H1 (cell line): ENCODE measurements at regions of chr15 and their contacts with region 1.

Region 1: GRCh38 chr15:41116116-41116871 is at the start of gene INO80:
- DNase-seq: peak; percentile 90 to 97
- H3K4me3 ChIP-seq: peak within 1 kb of the TSS; percentile 68 to 96 (median 86)
- H3K27ac ChIP-seq: peak within 1 kb of the TSS; percentile 100
- H3K4me1 ChIP-seq: peaks cover 0 to 3% (median 0%) of the 10 kb centered on the region in 4 experiments; a peak in 2 of 7 replicates
- H3K27me3 ChIP-seq: no peaks in the 10 kb centered on the region
- CTCF ChIP-seq: no peak
- EP300 ChIP-seq: peak in 1 of 2 experiments; percentile 25; a peak in 1 of 3 replicates
- POLR2A ChIP-seq: peak; percentile 85 to 95
- RAD21 ChIP-seq: 0 out of 4 replicates have a peak, but pooled peaks of 1 of the 2 experiments have one; percentile 4
- total RNA-seq, gene INO80: 22.1 and 24.5 TPM in 2 replicates

Region 2: GRCh38 chr15:41139619-41140018 is 23.3 kb after region 1 on chr15:
- CTCF ChIA-PET with region 1: interaction called, 4 read pairs
- POLR2A ChIA-PET with region 1: interaction called, 10 read pairs
- DNase-seq: no peak
- H3K4me3 ChIP-seq: no peak overlapping the region
- H3K27ac ChIP-seq: no peak overlapping the region
- H3K4me1 ChIP-seq: no peaks in the 10 kb centered on the region; a peak in 1 of 7 replicates
- H3K27me3 ChIP-seq: no peaks in the 10 kb centered on the region
- CTCF ChIP-seq: no peak
- EP300 ChIP-seq: no peak
- POLR2A ChIP-seq: no peak
- RAD21 ChIP-seq: no peak